Activated naive CD4-positive, alpha-beta T cell treated with anti-CD3 and anti-CD28 coated beads for 36 hours (primary cell): ENCODE measurements at regions of chr12 and their contacts with region 1.

Region 1: GRCh38 chr12:9244894-9245293 is 36.7 kb upstream of the PZP start:
- DNase-seq: peak; percentile 87
- H3K4me3 Mint-ChIP-seq: no peak overlapping the region
- H3K27ac Mint-ChIP-seq: peak overlapping the region; percentile 79
- H3K4me1 Mint-ChIP-seq: peaks cover 49% of the 10 kb centered on the region
- H3K27me3 Mint-ChIP-seq: peaks cover 9% of the 10 kb centered on the region

Region 2: DNA sequence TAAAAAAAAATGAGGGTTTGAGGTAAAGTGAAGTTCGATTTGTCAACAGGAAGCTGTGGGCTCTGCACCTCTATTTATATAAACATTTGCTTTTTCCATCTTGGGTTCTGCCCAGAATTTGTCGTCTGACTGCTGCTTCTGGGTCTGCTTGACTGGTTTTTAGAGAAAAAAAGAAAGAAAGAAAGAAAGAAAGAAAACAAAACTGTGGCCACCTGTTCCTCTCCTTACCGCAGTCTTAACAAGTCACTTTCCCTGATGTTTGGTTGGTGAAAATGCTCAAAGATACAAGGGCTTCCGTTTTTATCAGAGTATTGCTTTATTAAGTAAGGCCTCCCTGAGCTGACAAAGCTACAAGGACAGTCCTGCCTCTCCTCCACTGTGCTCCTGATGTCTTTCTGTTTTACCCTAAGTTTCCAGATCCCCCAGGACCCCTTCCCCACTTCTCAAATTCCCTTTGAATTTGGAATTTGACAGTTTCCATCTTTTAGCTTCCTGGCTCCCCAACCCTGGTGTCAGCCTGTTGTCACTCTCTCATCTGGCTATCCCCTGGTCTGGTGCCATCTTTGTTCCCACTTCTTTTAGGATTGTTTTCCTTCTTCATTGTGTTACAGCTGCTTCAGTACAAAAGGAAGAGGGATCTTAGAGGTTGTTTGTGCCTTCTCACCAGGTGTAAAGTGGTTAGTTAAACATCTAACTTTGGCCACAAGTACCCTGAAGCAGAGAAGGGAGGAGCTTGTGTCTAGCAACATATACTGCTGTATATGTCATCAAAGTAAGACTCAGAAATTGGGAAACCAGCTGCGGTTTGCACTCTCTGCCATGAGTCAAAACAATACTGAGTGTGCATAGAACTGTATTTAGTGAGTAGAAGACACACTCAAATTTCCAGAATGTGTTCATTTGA is 600.3 kb before region 1 on chr12:
- CTCF ChIA-PET with region 1: no interaction called
- intact Hi-C with region 1: loop called (anchors 1 kb)
- DNase-seq: peak; percentile 85
- H3K4me3 Mint-ChIP-seq: peak overlapping the region; percentile 47
- H3K27ac Mint-ChIP-seq: peak overlapping the region; percentile 86
- H3K4me1 Mint-ChIP-seq: peaks cover 36% of the 10 kb centered on the region
- H3K27me3 Mint-ChIP-seq: no peaks in the 10 kb centered on the region

Region 3: GRCh38 chr12:9103050-9103849 is 141.6 kb before region 1 on chr12:
- CTCF ChIA-PET with region 1: no interaction called
- intact Hi-C with region 1: loop called (anchors 1 kb)
- DNase-seq: peak; percentile 34
- H3K4me3 Mint-ChIP-seq: no peak overlapping the region
- H3K27ac Mint-ChIP-seq: peak overlapping the region; percentile 20
- H3K4me1 Mint-ChIP-seq: peaks cover 19% of the 10 kb centered on the region
- H3K27me3 Mint-ChIP-seq: no peaks in the 10 kb centered on the region

Region 4: DNA sequence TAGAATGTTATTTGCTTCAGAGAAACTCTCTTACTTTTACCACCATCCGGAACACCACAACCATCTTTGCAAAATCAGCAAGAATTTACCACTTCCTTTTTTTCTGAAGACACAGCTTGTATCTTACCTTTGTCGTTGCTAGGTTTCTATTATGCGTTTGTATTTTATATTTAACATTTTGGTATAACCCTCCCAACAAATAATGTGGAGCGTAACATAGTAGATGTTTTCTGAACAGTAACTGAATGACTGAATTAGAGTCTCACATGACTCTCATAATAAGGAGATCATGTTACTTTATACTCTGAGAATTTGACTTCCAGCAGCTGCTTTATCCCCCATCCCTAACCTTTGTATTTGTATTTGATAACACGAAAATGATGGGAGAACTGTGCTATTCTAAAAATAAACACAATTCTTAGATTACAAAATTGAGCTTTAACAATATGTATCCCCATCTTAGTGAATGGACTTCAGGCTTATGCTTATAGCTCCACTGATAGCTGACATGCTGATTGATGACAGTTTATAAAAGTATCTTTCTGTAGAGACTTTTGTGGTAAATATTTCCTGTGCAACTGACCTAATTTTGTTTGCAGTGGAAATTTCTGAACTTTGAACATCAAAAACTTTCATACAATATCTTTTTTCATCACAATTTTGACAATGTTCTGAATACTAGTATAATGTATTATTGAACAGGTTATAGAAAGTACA is 370.7 kb after region 1 on chr12:
- CTCF ChIA-PET with region 1: no interaction called
- intact Hi-C with region 1: loop called (anchors 10 kb)
- DNase-seq: no peak
- H3K4me3 Mint-ChIP-seq: peak overlapping the region; percentile 34
- H3K27ac Mint-ChIP-seq: peak overlapping the region; percentile 65
- H3K4me1 Mint-ChIP-seq: peaks cover 54% of the 10 kb centered on the region
- H3K27me3 Mint-ChIP-seq: no peaks in the 10 kb centered on the region

Region 5: GRCh38 chr12:9797722-9798619 is 553.1 kb after region 1 on chr12:
- CTCF ChIA-PET with region 1: no interaction called
- intact Hi-C with region 1: loop called (anchors 10 kb)
- DNase-seq: peak; percentile 84
- H3K4me3 Mint-ChIP-seq: peak overlapping the region; percentile 0
- H3K27ac Mint-ChIP-seq: peak overlapping the region; percentile 98
- H3K4me1 Mint-ChIP-seq: peaks cover 40% of the 10 kb centered on the region
- H3K27me3 Mint-ChIP-seq: no peaks in the 10 kb centered on the region

Region 6: DNA sequence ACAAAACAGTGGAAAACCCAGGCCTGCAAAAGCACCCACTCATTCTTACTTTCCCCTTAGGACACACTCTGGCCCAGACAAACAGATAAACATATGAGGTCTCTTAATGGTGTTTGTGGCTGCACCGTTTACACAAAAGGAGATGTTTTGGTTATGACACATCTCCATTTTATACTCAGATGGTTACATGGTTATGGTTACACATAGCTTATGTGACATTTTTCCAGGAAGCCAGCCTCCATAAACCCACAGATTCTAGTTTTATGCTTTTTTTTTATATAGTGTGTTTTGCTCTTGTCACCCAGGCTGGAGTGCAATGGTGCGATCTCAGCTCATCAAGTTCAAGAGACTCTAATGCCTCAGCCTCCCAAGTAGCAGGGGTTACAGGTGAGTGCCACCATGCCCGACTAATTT is 1059.3 kb after region 1 on chr12:
- CTCF ChIA-PET with region 1: no interaction called
- intact Hi-C with region 1: loop called (anchors 2 kb)
- DNase-seq: peak; percentile 59
- H3K4me3 Mint-ChIP-seq: no peak overlapping the region
- H3K27ac Mint-ChIP-seq: no peak overlapping the region
- H3K4me1 Mint-ChIP-seq: peaks cover 49% of the 10 kb centered on the region
- H3K27me3 Mint-ChIP-seq: peaks cover 5% of the 10 kb centered on the region